ENCODE measurements at regions of chr2 and their contacts with region 1.

Region 1: GRCh38 chr2:226862623-226863022 is 26.8 kb downstream of the RHBDD1 start:
- DNase-seq: no peak
- ATAC-seq: no peak
- H3K4me3 ChIP-seq: no peak overlapping the region
- H3K27ac ChIP-seq: no peak overlapping the region
- H3K4me1 ChIP-seq: peaks cover 0 to 5% (median 0%) of the 10 kb centered on the region in 9 donors
- H3K27me3 ChIP-seq: no peaks in the 10 kb centered on the region
- CTCF ChIP-seq: no peak

Region 2: GRCh38 chr2:226818930-226819329 is 43.7 kb before region 1 on chr2:
- intact Hi-C with region 1: loop called in 2 of 10 experiments (anchors 1 to 2 kb)
- DNase-seq: no peak
- ATAC-seq: no peak
- H3K4me3 ChIP-seq: no peak overlapping the region
- H3K27ac ChIP-seq: no peak overlapping the region
- H3K4me1 ChIP-seq: no peaks in the 10 kb centered on the region
- H3K27me3 ChIP-seq: no peaks in the 10 kb centered on the region
- CTCF ChIP-seq: no peak

Region 3: GRCh38 chr2:226828191-226828590 is 34.4 kb before region 1 on chr2:
- intact Hi-C with region 1: loop called in 1 of 10 experiments (anchors 2 kb)
- DNase-seq: no peak
- ATAC-seq: no peak
- H3K4me3 ChIP-seq: no peak overlapping the region
- H3K27ac ChIP-seq: no peak overlapping the region
- H3K4me1 ChIP-seq: no peaks in the 10 kb centered on the region
- H3K27me3 ChIP-seq: no peaks in the 10 kb centered on the region
- CTCF ChIP-seq: no peak

Region 4: GRCh38 chr2:226875438-226876225 is 13.0 kb after region 1 on chr2:
- intact Hi-C with region 1: no loop called
- DNase-seq: no peak
- ATAC-seq: no peak
- H3K4me3 ChIP-seq: no peak overlapping the region
- H3K27ac ChIP-seq: no peak overlapping the region
- H3K4me1 ChIP-seq: peaks cover 0 to 14% (median 0%) of the 10 kb centered on the region in 9 donors
- H3K27me3 ChIP-seq: no peaks in the 10 kb centered on the region
- CTCF ChIP-seq: no peak

Region 5: DNA sequence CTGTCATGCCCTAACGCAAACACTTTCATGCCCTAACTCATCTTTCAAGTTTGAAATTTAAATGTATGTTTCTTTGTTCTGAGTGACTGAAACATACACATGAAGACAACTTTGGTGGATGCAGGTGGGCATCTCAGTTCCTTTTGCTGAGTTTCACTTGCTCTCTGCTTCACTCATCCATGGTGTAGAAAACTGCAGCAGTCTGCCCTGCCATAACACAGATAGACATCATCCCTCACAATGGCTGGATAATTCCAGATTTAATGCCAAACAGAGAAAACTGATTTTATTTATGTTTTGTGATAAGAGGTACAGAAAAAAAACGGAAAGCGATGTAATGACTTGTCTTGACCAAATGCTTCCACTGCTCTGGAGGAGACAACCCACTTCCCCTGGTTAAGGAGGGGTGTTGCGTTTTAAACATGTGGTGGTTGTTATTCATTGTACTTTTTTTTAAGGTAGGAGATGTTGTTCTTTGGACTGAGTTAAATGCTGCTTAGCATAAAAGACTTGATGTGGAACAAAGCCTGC is 43.6 kb after region 1 on chr2:
- intact Hi-C with region 1: no loop called
- DNase-seq: no peak
- ATAC-seq: no peak
- H3K4me3 ChIP-seq: no peak overlapping the region
- H3K27ac ChIP-seq: no peak overlapping the region
- H3K4me1 ChIP-seq: no peaks in the 10 kb centered on the region
- H3K27me3 ChIP-seq: no peaks in the 10 kb centered on the region
- CTCF ChIP-seq: no peak

Region 6: DNA sequence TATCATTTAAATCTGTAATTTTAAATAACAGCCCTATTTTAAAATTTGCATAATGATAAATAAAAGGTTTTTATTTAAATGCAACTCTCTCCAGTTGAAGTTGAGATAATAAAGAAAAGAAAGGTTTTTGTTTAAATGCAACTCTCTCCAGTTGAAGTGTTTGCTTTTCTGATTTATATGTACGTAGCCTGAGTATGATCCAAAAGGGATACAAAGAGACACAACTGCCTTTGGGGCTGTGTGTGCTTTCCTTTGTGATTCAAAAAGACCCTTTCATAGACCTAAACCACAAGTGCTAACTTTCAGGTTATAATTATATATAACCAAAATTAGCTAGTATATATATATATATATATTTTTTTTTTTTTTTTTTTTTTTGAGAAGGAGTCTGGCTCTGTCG is 386.3 kb after region 1 on chr2:
- intact Hi-C with region 1: no loop called
- DNase-seq: no peak
- ATAC-seq: no peak
- H3K4me3 ChIP-seq: no peak overlapping the region
- H3K27ac ChIP-seq: no peak overlapping the region
- H3K4me1 ChIP-seq: no peaks in the 10 kb centered on the region
- H3K27me3 ChIP-seq: no peaks in the 10 kb centered on the region
- CTCF ChIP-seq: no peak